ENCODE measurements at regions of chr22 and their contacts with region 1.

Region 1: DNA sequence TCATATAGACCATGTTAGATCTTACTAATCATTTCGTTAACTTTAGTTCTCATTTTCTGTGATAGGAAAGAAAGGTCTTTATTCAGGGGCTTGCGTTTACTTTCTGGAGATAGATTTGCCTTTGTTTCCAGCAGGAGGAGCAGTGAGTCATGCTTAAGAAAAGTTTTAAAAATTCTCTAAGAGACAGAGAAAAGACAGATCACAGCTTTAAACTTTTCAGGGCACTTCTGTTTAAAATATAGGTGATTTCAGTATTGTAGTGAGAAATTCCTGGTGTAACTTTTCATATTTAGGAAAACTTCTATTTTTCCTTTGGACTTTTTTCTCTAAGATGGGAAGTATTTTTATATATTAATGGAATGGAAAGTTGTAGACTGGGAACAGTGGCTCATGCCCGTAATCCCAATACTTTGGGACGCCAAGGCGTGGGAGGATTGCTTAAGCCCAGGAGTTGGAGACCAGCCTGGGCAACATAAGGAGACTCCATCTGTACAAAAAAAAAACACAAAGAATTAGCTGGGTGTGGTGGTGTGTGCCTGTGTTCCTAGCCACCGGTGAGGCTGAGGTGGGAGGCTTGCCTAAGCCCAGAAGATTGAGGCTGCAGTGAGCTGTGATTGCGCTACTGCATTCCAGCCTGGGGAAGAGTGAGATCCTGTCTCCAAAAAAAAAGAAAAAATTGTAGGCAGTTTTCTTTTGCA is 60.3 kb downstream of the ATXN10 start:
- DNase-seq: peak; percentile 47
- ATAC-seq: peak; percentile 79
- H3K4me3 ChIP-seq: no peak overlapping the region
- H3K27ac ChIP-seq: 0 out of 2 replicates have a peak overlapping the region, but pooled peaks have one; percentile 9
- H3K4me1 ChIP-seq: peaks cover 6% of the 10 kb centered on the region
- H3K27me3 ChIP-seq: no peaks in the 10 kb centered on the region
- CTCF ChIP-seq: peak; percentile 53
- POLR2A ChIP-seq: no peak
- RAD21 ChIP-seq: peak; percentile 45

Region 2: DNA sequence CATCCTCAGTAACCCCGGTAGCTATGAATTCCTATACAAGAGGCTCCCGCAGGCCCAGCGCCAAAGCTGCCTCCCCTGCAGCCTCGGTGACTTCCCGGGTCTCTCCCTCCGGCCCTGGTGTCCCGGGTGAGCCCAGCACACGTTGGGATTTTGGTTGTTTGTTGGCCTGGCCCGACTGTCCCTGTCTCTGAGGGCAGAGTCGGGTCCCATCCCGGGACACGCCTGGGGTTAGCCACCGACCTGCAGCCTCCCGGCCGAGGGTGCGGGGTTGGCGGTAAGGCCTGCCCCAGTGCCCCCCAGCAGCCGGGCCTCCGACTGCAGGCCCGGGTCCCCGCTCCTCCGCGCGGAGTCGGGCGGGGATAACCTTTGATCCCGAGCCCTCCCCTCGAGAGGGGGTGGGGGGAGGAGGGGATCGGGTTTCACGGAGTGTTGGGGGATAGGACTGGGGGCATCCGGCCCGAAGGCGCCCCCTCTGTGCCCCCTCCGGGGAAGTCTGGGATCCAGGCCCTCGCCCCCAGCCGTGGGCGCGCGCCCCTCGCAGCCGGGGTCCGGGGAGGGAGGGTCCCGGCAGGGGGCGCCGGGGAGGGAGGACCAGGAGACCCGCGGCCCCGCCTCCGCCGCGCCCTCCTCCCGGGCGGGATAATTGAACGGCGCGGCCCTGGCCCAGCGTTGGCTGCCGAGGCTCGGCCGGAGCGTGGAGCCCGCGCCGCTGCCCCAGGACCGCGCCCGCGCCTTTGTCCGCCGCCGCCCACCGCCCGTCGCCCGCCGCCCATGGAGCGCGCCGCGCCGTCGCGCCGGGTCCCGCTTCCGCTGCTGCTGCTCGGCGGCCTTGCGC is 229.5 kb before region 1 on chr22 and contains the start of gene FBLN1:
- CTCF ChIA-PET with region 1: no interaction called
- POLR2A ChIA-PET with region 1: no interaction called
- dilution Hi-C with region 1: no loop called
- in situ Hi-C with region 1: no loop called
- intact Hi-C with region 1: no loop called
- DNase-seq: no peak
- ATAC-seq: peak; percentile 74
- H3K4me3 ChIP-seq: peak within 1 kb of the TSS; percentile 80
- H3K27ac ChIP-seq: peak within 1 kb of the TSS; percentile 90
- H3K4me1 ChIP-seq: peaks cover 28% of the 10 kb centered on the region
- H3K27me3 ChIP-seq: no peaks in the 10 kb centered on the region
- CTCF ChIP-seq: peak; percentile 21; the same call in 1 of the 2 replicates
- POLR2A ChIP-seq: no peak
- RAD21 ChIP-seq: no peak
- total RNA-seq, gene FBLN1: 11.3 and 11.4 TPM in 2 replicates

Region 3: GRCh38 chr22:45680932-45681700 is 50.8 kb before region 1 on chr22:
- CTCF ChIA-PET with region 1: interaction called, 3 read pairs
- POLR2A ChIA-PET with region 1: no interaction called
- dilution Hi-C with region 1: no loop called
- in situ Hi-C with region 1: no loop called
- intact Hi-C with region 1: loop called (anchors 5 kb)
- DNase-seq: peak; percentile 90
- ATAC-seq: peak; percentile 80
- H3K4me3 ChIP-seq: peak overlapping the region; percentile 17; the same call in 1 of the 2 replicates
- H3K27ac ChIP-seq: peak overlapping the region; percentile 88
- H3K4me1 ChIP-seq: peaks cover 36% of the 10 kb centered on the region
- H3K27me3 ChIP-seq: no peaks in the 10 kb centered on the region
- CTCF ChIP-seq: no peak
- POLR2A ChIP-seq: no peak
- RAD21 ChIP-seq: no peak